ENCODE measurements at regions of chr19 and their contacts with region 1.

Region 1: GRCh38 chr19:5775668-5776309 is 8.8 kb downstream of the PRR22 start:
- DNase-seq: no peak
- H3K4me3 ChIP-seq: no peak overlapping the region
- H3K27ac ChIP-seq: no peak overlapping the region
- H3K27me3 ChIP-seq: peaks cover 4% of the 10 kb centered on the region
- CTCF ChIP-seq: no peak

Region 2: GRCh38 chr19:5560156-5560811 is 215.5 kb before region 1 on chr19:
- CTCF ChIA-PET with region 1: interaction called, 10 read pairs
- POLR2A ChIA-PET with region 1: no interaction called
- DNase-seq: no peak
- H3K4me3 ChIP-seq: no peak overlapping the region
- H3K27ac ChIP-seq: no peak overlapping the region
- H3K27me3 ChIP-seq: peaks cover 39% of the 10 kb centered on the region
- CTCF ChIP-seq: no peak

Region 3: GRCh38 chr19:5690125-5690954 is 85.4 kb before region 1 on chr19 and contains the start of gene RPL36:
- CTCF ChIA-PET with region 1: no interaction called
- POLR2A ChIA-PET with region 1: interaction called, 12 read pairs
- DNase-seq: peak; percentile 92
- H3K4me3 ChIP-seq: peak within 1 kb of the TSS; percentile 96
- H3K27ac ChIP-seq: peak within 1 kb of the TSS; percentile 89
- H3K27me3 ChIP-seq: no peaks in the 10 kb centered on the region
- CTCF ChIP-seq: peak; percentile 97
- polyA plus RNA-seq, gene RPL36: 478 and 743 TPM in 2 replicates

Region 4: GRCh38 chr19:5711713-5712161 is 64.1 kb before region 1 on chr19:
- CTCF ChIA-PET with region 1: no interaction called
- POLR2A ChIA-PET with region 1: no interaction called
- DNase-seq: no peak
- H3K4me3 ChIP-seq: no peak overlapping the region
- H3K27ac ChIP-seq: no peak overlapping the region
- H3K27me3 ChIP-seq: no peaks in the 10 kb centered on the region
- CTCF ChIP-seq: no peak

Region 5: GRCh38 chr19:5790573-5791520 is 15.1 kb after region 1 on chr19 and contains the start of gene DUS3L:
- CTCF ChIA-PET with region 1: interaction called, 29 read pairs
- POLR2A ChIA-PET with region 1: interaction called, 3 read pairs
- DNase-seq: peak; percentile 96
- H3K4me3 ChIP-seq: peak within 1 kb of the TSS; percentile 99
- H3K27ac ChIP-seq: peak within 1 kb of the TSS; percentile 95
- H3K27me3 ChIP-seq: no peaks in the 10 kb centered on the region
- CTCF ChIP-seq: no peak
- polyA plus RNA-seq, gene DUS3L: 7.8 and 8.0 TPM in 2 replicates

Region 6: GRCh38 chr19:5926641-5927440 is 151.1 kb after region 1 on chr19:
- CTCF ChIA-PET with region 1: no interaction called
- POLR2A ChIA-PET with region 1: no interaction called
- DNase-seq: no peak
- H3K4me3 ChIP-seq: no peak overlapping the region
- H3K27ac ChIP-seq: peak overlapping the region; percentile 31
- H3K27me3 ChIP-seq: no peaks in the 10 kb centered on the region
- CTCF ChIP-seq: no peak